ENCODE measurements at regions of chr12 and their contacts with region 1.

Region 1: GRCh38 chr12:111451649-111452129 is 46.0 kb downstream of the SH2B3 start:
- DNase-seq: peak; percentile 67 to 80 (median 70)
- H3K4me3 ChIP-seq: no peak overlapping the region
- H3K27ac ChIP-seq: no peak overlapping the region
- H3K4me1 ChIP-seq: peaks cover 7 to 39% (median 28%) of the 10 kb centered on the region in 4 experiments
- H3K27me3 ChIP-seq: no peaks in the 10 kb centered on the region

Region 2: GRCh38 chr12:111330800-111331752 is 120.6 kb before region 1 on chr12:
- CTCF ChIA-PET with region 1: interaction called, 19 read pairs
- POLR2A ChIA-PET with region 1: no interaction called
- DNase-seq: peak; percentile 57 to 72 (median 59)
- H3K4me3 ChIP-seq: no peak overlapping the region
- H3K27ac ChIP-seq: no peak overlapping the region
- H3K4me1 ChIP-seq: peaks cover 0 to 2% (median 0%) of the 10 kb centered on the region in 4 experiments
- H3K27me3 ChIP-seq: peaks cover 0 to 2% (median 0%) of the 10 kb centered on the region in 5 experiments

Region 3: GRCh38 chr12:111368788-111369495 is 82.7 kb before region 1 on chr12 and contains the start of gene PHETA1:
- CTCF ChIA-PET with region 1: interaction called, 11 read pairs
- POLR2A ChIA-PET with region 1: no interaction called
- DNase-seq: peak; percentile 56 to 66 (median 56)
- H3K4me3 ChIP-seq: peak within 1 kb of the TSS; percentile 51 to 79 (median 71)
- H3K27ac ChIP-seq: peak within 1 kb of the TSS in 1 of 2 experiments; percentile 14
- H3K4me1 ChIP-seq: peaks cover 3 to 27% (median 23%) of the 10 kb centered on the region in 4 experiments
- H3K27me3 ChIP-seq: no peaks in the 10 kb centered on the region

Region 4: GRCh38 chr12:111405149-111405860 is 46.4 kb before region 1 on chr12:
- CTCF ChIA-PET with region 1: interaction called, 820 read pairs
- POLR2A ChIA-PET with region 1: interaction called, 5 read pairs
- DNase-seq: peak; percentile 97 to 98 (median 98)
- H3K4me3 ChIP-seq: peak overlapping the region; percentile 24 to 98 (median 73)
- H3K27ac ChIP-seq: peak overlapping the region in 1 of 2 experiments; percentile 81
- H3K4me1 ChIP-seq: peaks cover 17 to 68% (median 65%) of the 10 kb centered on the region in 4 experiments
- H3K27me3 ChIP-seq: no peaks in the 10 kb centered on the region

Region 5: DNA sequence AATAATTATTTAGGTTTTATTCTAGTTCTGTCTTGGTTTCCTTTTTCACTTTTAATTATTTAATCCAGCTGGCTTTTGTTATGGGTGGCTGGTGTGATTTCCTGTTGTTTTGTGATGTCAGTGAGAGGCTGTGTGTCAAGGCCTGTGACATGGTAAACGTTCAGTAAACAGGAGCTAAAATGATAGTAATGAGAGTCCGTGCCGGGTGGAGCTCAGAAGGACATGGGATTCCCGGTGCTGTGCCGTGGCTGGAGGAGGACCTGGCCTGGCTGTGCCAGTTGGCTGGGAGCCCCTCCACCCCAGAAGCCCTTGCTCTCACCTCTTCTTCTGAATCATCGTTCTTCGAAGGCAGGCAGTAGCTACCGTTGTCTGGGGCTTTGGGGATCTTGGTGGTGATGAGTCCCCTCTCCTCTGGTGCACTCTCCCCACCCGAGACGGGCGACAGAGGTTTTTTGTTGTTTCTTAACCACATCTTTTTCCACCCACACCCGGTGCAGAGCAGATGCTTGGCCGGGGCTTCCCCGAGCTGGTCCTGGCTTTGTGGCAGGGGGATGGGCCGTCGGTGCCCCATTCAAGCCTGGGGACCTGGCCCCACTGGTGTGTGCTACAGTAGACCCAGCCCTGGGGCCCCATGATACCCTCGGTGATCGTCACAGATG is 16.9 kb before region 1 on chr12:
- CTCF ChIA-PET with region 1: interaction called, 484 read pairs
- POLR2A ChIA-PET with region 1: interaction called, 6 read pairs
- DNase-seq: peak; percentile 74 to 96 (median 95)
- H3K4me3 ChIP-seq: peak overlapping the region in 4 of 7 experiments; percentile 13 to 59 (median 50)
- H3K27ac ChIP-seq: peak overlapping the region; percentile 41 to 83
- H3K4me1 ChIP-seq: peaks cover 26 to 99% (median 97%) of the 10 kb centered on the region in 4 experiments
- H3K27me3 ChIP-seq: no peaks in the 10 kb centered on the region

Region 6: DNA sequence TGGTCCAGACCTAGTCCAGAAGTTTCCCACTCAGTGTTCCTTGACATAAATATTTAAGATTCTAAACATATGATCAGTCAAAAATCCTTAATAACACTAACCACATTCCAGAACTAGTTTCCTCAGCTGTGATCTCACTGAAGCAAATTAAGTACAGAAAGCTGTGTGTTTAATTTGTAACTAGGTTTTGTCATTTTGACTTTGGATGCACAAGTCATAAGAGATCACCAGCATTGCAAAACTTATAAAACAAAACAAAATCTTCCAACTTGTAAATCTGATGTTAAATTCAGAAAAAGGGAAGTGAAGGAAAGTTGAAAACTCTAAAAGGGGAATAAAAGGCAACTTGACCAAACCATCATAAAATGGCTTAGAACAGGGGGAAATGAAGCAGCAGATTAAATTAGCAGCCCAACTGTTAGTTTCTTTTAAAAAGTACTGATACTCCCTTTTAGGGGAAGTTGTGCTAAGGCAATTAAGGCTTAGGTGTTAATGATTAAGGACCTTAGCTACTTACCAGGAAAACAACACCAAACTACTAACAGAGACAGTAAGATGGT is 10.6 kb after region 1 on chr12:
- CTCF ChIA-PET with region 1: interaction called, 39 read pairs
- POLR2A ChIA-PET with region 1: no interaction called
- DNase-seq: peak in 2 of 3 donors; percentile 64 to 71
- H3K4me3 ChIP-seq: no peak overlapping the region
- H3K27ac ChIP-seq: peak overlapping the region in 1 of 2 experiments; percentile 30
- H3K4me1 ChIP-seq: peaks cover 0 to 21% (median 11%) of the 10 kb centered on the region in 4 experiments
- H3K27me3 ChIP-seq: no peaks in the 10 kb centered on the region

Region 7: DNA sequence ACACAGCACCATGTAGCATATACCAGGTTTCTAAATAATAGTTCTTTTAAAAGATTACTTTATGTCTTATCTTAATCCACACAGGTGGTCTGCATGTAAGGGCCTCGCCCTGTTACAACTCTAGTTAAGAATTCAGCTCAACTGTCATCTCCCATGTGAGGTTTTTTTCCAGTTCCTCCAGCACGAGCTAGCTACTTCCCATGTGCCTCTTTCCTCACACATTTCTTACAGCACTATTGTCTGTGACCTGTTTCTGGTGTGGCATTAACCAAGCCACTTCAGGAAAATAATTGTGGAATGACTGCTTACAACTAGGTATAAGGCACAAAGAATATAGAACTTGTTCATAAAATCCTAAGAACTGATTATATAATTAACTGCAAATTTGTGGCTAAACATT is 19.5 kb after region 1 on chr12:
- CTCF ChIA-PET with region 1: interaction called, 11 read pairs
- POLR2A ChIA-PET with region 1: no interaction called
- DNase-seq: no peak
- H3K4me3 ChIP-seq: no peak overlapping the region
- H3K27ac ChIP-seq: peak overlapping the region in 1 of 2 experiments; percentile 55
- H3K4me1 ChIP-seq: peaks cover 0 to 3% (median 0%) of the 10 kb centered on the region in 4 experiments
- H3K27me3 ChIP-seq: no peaks in the 10 kb centered on the region